PC-3 (cell line): ENCODE measurements at regions of chr3 and their contacts with region 1.

Region 1: DNA sequence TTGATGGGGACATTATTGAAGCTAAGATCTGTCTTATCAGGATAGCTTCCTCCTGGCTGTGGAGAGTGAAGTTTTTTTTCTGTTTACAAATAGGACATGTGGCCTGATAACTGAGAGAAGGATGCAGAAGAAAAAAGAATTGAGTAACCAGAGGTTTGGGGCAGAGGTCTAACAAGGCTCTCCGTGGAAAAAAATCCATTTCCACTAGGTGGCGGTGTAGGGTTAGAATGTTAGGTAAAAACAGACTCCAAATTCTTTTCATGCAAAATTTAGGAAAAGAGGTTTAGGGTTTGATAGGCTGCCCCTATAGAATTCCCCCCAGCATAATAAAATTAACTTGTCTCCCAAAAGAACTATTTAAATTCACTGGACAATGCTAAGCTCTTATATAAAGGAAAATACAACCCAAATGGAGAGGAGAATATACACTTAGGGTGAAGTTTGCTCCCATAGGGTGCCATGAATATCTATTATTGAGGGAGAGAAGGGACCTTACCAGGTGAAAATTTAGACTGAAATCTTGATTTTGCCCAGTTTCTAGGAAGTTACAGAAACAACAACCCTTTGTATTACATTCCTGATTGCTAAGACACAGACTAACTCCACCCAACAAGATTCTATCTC is 1560.4 kb downstream of the OTOL1 start:
- DNase-seq: peak; percentile 85
- ATAC-seq: peak; percentile 71
- H3K4me3 ChIP-seq: no peak overlapping the region
- H3K27ac ChIP-seq: no peak overlapping the region
- H3K4me1 ChIP-seq: no peaks in the 10 kb centered on the region
- H3K27me3 ChIP-seq: no peaks in the 10 kb centered on the region
- CTCF ChIP-seq: peak; percentile 82

Region 2: GRCh38 chr3:163018664-163019063 is 38.3 kb before region 1 on chr3:
- CTCF ChIA-PET with region 1: no interaction called
- POLR2A ChIA-PET with region 1: no interaction called
- intact Hi-C with region 1: no loop called
- DNase-seq: no peak
- ATAC-seq: no peak
- H3K4me3 ChIP-seq: no peak overlapping the region
- H3K27ac ChIP-seq: no peak overlapping the region
- H3K4me1 ChIP-seq: no peaks in the 10 kb centered on the region
- H3K27me3 ChIP-seq: no peaks in the 10 kb centered on the region
- CTCF ChIP-seq: no peak

Region 3: DNA sequence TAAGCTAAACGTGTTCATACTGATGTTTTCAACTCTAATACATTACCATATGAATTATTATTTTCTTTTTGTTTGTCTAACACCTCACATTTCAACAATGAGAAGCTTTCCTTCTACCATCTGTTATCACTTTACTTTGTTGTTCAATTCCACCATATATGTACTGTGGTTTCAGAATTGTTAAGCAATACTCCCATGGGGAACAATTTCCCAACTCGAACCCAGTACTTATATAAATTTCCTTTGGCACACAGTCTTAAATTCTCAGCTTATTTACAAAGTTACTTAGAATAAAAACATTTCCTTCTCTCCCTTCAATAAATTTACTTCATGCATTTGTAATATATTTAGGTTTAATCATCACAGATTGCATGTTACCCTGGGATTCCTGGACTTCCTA is 204.1 kb after region 1 on chr3:
- CTCF ChIA-PET with region 1: no interaction called
- POLR2A ChIA-PET with region 1: no interaction called
- intact Hi-C with region 1: loop called (anchors 10 kb)
- DNase-seq: no peak
- ATAC-seq: no peak
- H3K4me3 ChIP-seq: no peak overlapping the region
- H3K27ac ChIP-seq: no peak overlapping the region
- H3K4me1 ChIP-seq: no peaks in the 10 kb centered on the region
- H3K27me3 ChIP-seq: no peaks in the 10 kb centered on the region
- CTCF ChIP-seq: no peak

Region 4: GRCh38 chr3:163368168-163368567 is 311.2 kb after region 1 on chr3:
- CTCF ChIA-PET with region 1: no interaction called
- POLR2A ChIA-PET with region 1: no interaction called
- intact Hi-C with region 1: loop called (anchors 10 kb)
- DNase-seq: peak; percentile 90
- ATAC-seq: peak; percentile 98
- H3K4me3 ChIP-seq: no peak overlapping the region
- H3K27ac ChIP-seq: peak overlapping the region; percentile 57
- H3K4me1 ChIP-seq: peaks cover 14% of the 10 kb centered on the region
- H3K27me3 ChIP-seq: no peaks in the 10 kb centered on the region
- CTCF ChIP-seq: no peak

Region 5: GRCh38 chr3:163476183-163476582 is 419.2 kb after region 1 on chr3:
- CTCF ChIA-PET with region 1: no interaction called
- POLR2A ChIA-PET with region 1: no interaction called
- intact Hi-C with region 1: loop called (anchors 5 kb)
- DNase-seq: peak; percentile 75
- ATAC-seq: peak; percentile 89
- H3K4me3 ChIP-seq: no peak overlapping the region
- H3K27ac ChIP-seq: no peak overlapping the region
- H3K4me1 ChIP-seq: no peaks in the 10 kb centered on the region
- H3K27me3 ChIP-seq: no peaks in the 10 kb centered on the region
- CTCF ChIP-seq: peak; percentile 78

Region 6: GRCh38 chr3:163490119-163490518 is 433.1 kb after region 1 on chr3:
- CTCF ChIA-PET with region 1: no interaction called
- POLR2A ChIA-PET with region 1: no interaction called
- intact Hi-C with region 1: loop called (anchors 1 kb)
- DNase-seq: peak; percentile 79
- ATAC-seq: peak; percentile 95
- H3K4me3 ChIP-seq: no peak overlapping the region
- H3K27ac ChIP-seq: no peak overlapping the region
- H3K4me1 ChIP-seq: no peaks in the 10 kb centered on the region
- H3K27me3 ChIP-seq: no peaks in the 10 kb centered on the region
- CTCF ChIP-seq: peak; percentile 91

Region 7: GRCh38 chr3:163622384-163622783 is 565.4 kb after region 1 on chr3:
- CTCF ChIA-PET with region 1: no interaction called
- POLR2A ChIA-PET with region 1: no interaction called
- intact Hi-C with region 1: loop called (anchors 2 kb)
- DNase-seq: peak; percentile 63
- ATAC-seq: peak; percentile 96
- H3K4me3 ChIP-seq: no peak overlapping the region
- H3K27ac ChIP-seq: no peak overlapping the region
- H3K4me1 ChIP-seq: no peaks in the 10 kb centered on the region
- H3K27me3 ChIP-seq: no peaks in the 10 kb centered on the region
- CTCF ChIP-seq: peak; percentile 85

Region 8: GRCh38 chr3:163951397-163951987 is 894.5 kb after region 1 on chr3:
- CTCF ChIA-PET with region 1: no interaction called
- POLR2A ChIA-PET with region 1: no interaction called
- intact Hi-C with region 1: loop called (anchors 2 kb)
- DNase-seq: peak; percentile 51
- ATAC-seq: peak; percentile 56
- H3K4me3 ChIP-seq: no peak overlapping the region
- H3K27ac ChIP-seq: no peak overlapping the region
- H3K4me1 ChIP-seq: no peaks in the 10 kb centered on the region
- H3K27me3 ChIP-seq: no peaks in the 10 kb centered on the region
- CTCF ChIP-seq: peak; percentile 64